Aorta (tissue), 5 donors: ENCODE measurements at regions of chr19 and their contacts with region 1.

Region 1: DNA sequence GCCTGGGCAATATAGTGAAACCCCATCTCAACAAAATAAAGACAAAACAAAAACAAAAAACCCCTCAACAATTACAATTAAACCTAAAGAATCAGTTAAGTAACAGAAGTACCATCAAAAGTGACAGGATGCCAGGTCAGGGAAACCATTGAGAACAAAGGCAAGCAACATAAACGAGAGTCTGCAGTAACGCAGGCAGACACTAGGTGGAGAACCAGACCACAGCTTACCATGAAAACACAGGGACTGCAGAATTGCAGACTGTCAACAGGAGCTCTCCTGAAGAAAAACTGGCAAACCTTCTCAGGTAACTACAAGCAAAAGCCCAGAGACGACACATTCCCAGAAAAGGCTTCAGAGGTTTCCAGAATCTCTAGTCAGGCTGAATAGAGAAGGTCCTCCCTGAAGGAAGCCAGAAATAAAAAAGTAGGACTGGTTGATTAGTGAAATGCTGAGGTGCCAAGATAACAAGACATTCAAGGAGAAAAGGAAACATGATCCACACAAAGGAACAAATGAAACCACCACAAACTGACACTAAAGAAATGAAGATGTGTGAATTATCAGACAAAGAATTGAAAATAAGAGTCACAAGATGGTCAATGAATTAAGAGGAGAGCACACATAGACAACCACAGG is 2.2 kb upstream of the ZNF665 start:
- DNase-seq: peak; percentile 80
- ATAC-seq: peak; percentile 82
- H3K4me3 ChIP-seq: no peak overlapping the region
- H3K27ac ChIP-seq: no peak overlapping the region
- H3K4me1 ChIP-seq: no peaks in the 10 kb centered on the region
- H3K27me3 ChIP-seq: no peaks in the 10 kb centered on the region

Region 2: GRCh38 chr19:52993323-52994178 is 201.8 kb before region 1 on chr19:
- intact Hi-C with region 1: loop called in 1 of 2 experiments (anchors 10 kb)
- DNase-seq: peak; percentile 86 to 91
- ATAC-seq: peak; percentile 94
- H3K4me3 ChIP-seq: peak overlapping the region; percentile 24 to 85
- H3K27ac ChIP-seq: peak overlapping the region in 1 of 2 donors; percentile 58
- H3K4me1 ChIP-seq: peaks cover 0 to 2% of the 10 kb centered on the region in 2 donors
- H3K27me3 ChIP-seq: no peaks in the 10 kb centered on the region

Region 3: DNA sequence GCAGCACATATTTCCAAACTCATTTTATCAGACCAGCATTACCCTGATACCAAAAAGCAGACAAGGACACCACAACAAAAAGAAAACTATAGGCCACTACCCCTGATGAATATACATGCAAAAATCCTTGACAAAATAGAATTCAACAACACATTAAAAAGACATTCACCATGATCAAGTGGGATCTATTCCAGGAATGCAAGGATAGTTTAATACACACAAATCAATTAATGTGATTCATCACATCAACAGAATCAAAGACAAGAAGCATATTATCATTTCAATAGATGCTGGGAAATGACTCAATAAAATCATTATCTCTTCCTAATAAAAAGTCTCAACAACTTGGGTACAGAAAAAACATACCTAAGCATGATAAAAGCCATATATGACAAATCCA is 47.7 kb before region 1 on chr19:
- intact Hi-C with region 1: no loop called
- DNase-seq: no peak
- ATAC-seq: no peak
- H3K4me3 ChIP-seq: no peak overlapping the region
- H3K27ac ChIP-seq: no peak overlapping the region
- H3K4me1 ChIP-seq: no peaks in the 10 kb centered on the region
- H3K27me3 ChIP-seq: no peaks in the 10 kb centered on the region

Region 4: GRCh38 chr19:53158119-53158656 is 37.2 kb before region 1 on chr19:
- intact Hi-C with region 1: no loop called
- DNase-seq: peak; percentile 49 to 80
- ATAC-seq: peak; percentile 65
- H3K4me3 ChIP-seq: peak overlapping the region; percentile 65 to 78
- H3K27ac ChIP-seq: peak overlapping the region in 1 of 2 donors; percentile 0
- H3K4me1 ChIP-seq: no peaks in the 10 kb centered on the region
- H3K27me3 ChIP-seq: no peaks in the 10 kb centered on the region

Region 5: GRCh38 chr19:53254411-53255341 is 59.3 kb after region 1 on chr19 and contains the start of gene ZNF677:
- intact Hi-C with region 1: loop called in 1 of 2 experiments (anchors 10 kb)
- DNase-seq: peak; percentile 96 to 98
- ATAC-seq: peak; percentile 100
- H3K4me3 ChIP-seq: peak within 1 kb of the TSS; percentile 69 to 92
- H3K27ac ChIP-seq: peak within 1 kb of the TSS in 1 of 2 donors; percentile 1
- H3K4me1 ChIP-seq: no peaks in the 10 kb centered on the region
- H3K27me3 ChIP-seq: no peaks in the 10 kb centered on the region
- total RNA-seq, gene ZNF677: 18.5 to 23.5 TPM

Region 6: GRCh38 chr19:53275480-53275879 is 80.1 kb after region 1 on chr19:
- intact Hi-C with region 1: no loop called
- DNase-seq: no peak
- ATAC-seq: no peak
- H3K4me3 ChIP-seq: no peak overlapping the region
- H3K27ac ChIP-seq: no peak overlapping the region
- H3K4me1 ChIP-seq: no peaks in the 10 kb centered on the region
- H3K27me3 ChIP-seq: peaks cover 0 to 2% of the 10 kb centered on the region in 2 donors

Region 7: GRCh38 chr19:53365134-53365898 is 169.9 kb after region 1 on chr19 and contains the start of gene ZNF525:
- intact Hi-C with region 1: loop called (anchors 5 to 10 kb)
- DNase-seq: peak; percentile 95 to 97
- ATAC-seq: peak; percentile 100
- H3K4me3 ChIP-seq: peak within 1 kb of the TSS; percentile 52 to 62
- H3K27ac ChIP-seq: peak within 1 kb of the TSS in 1 of 2 donors; percentile 43
- H3K4me1 ChIP-seq: no peaks in the 10 kb centered on the region
- H3K27me3 ChIP-seq: no peaks in the 10 kb centered on the region
- total RNA-seq, gene ZNF525: 12.0 to 14.8 TPM

Region 8: DNA sequence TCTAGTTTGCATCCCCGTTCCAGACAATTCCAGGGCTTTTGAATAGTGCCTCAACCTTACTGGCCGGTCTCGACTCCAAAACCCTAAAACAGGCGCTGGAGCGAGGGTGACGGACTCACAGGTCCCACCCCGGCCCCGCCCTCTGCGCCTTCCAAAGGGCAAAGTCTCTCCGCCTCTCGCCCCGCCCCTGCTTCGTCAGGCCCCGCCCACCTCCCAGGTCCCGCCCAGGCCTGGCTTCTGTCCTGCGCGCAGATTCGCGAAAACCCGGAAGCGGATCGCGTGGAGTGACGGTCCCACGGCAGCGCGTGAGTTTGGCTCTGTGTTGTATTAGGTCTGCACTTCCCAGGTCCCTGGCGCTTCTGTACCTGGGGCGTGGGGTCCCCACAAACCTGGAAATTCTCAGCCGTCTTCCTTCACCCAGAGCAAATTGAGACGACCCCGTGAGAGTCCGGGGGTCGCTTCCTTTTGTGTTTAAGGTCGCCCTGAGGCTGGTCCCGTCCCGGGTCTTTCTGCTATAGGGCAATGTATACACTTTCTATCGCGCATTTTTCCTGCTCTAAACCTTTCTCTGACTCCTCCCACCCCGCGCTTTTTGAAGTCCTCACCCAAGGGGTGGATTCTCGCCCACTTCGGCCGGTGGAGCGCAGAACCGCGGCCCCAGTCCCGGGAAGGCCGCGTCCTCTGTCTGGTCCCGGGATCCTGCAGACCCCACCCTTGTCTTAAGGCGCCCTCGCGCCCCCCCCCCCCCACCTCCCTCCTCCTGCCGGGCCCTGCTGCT is 272.3 kb after region 1 on chr19 and contains the start of gene ZNF813:
- intact Hi-C with region 1: loop called in 1 of 2 experiments (anchors 5 kb)
- DNase-seq: peak; percentile 98 to 99
- ATAC-seq: peak; percentile 99
- H3K4me3 ChIP-seq: peak within 1 kb of the TSS; percentile 77 to 82
- H3K27ac ChIP-seq: peak within 1 kb of the TSS in 1 of 2 donors; percentile 18
- H3K4me1 ChIP-seq: no peaks in the 10 kb centered on the region
- H3K27me3 ChIP-seq: no peaks in the 10 kb centered on the region
- total RNA-seq, gene ZNF813: 3.0 to 4.0 TPM